A673 (cell line): ENCODE measurements at regions of chr1 and their contacts with region 1.

Region 1: DNA sequence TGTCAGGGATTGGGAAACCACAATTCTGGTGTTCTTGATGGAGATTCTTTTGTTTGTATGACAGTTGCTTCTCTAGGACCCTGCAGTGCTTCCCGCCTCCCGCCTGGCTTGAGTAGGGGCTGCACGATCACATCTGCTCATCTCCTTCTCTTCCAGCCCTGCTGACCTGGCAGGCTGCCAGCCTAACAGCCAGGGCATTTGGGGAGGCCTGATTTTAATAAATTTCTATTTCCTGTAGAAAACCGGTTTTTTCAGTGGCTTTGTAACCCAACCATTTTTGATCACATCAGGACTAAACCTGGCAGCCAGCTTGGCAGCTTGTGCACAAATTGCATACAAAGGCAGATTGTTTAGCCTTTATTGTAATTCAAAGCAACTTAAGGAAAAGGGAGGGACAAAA is 78.9 kb downstream of the UBE2U start:
- DNase-seq: peak; percentile 98
- H3K4me3 ChIP-seq: no peak overlapping the region
- H3K27ac ChIP-seq: peak overlapping the region; percentile 78
- H3K4me1 ChIP-seq: peaks cover 43% of the 10 kb centered on the region
- H3K27me3 ChIP-seq: no peaks in the 10 kb centered on the region
- CTCF ChIP-seq: no peak

Region 2: GRCh38 chr1:64013404-64013803 is 268.9 kb before region 1 on chr1:
- CTCF ChIA-PET with region 1: no interaction called
- POLR2A ChIA-PET with region 1: no interaction called
- intact Hi-C with region 1: no loop called
- DNase-seq: no peak
- H3K4me3 ChIP-seq: no peak overlapping the region
- H3K27ac ChIP-seq: no peak overlapping the region
- H3K4me1 ChIP-seq: no peaks in the 10 kb centered on the region
- H3K27me3 ChIP-seq: no peaks in the 10 kb centered on the region
- CTCF ChIP-seq: no peak

Region 3: GRCh38 chr1:64539781-64540218 is 257.4 kb after region 1 on chr1:
- CTCF ChIA-PET with region 1: no interaction called
- POLR2A ChIA-PET with region 1: no interaction called
- intact Hi-C with region 1: loop called (anchors 5 kb)
- DNase-seq: peak; percentile 60
- H3K4me3 ChIP-seq: peak overlapping the region; percentile 31
- H3K27ac ChIP-seq: peak overlapping the region; percentile 79
- H3K4me1 ChIP-seq: peaks cover 73% of the 10 kb centered on the region
- H3K27me3 ChIP-seq: no peaks in the 10 kb centered on the region
- CTCF ChIP-seq: no peak